Left ventricle myocardium superior (tissue), 1 donor: ENCODE measurements at regions of chr9 and their contacts with region 1.

Region 1: DNA sequence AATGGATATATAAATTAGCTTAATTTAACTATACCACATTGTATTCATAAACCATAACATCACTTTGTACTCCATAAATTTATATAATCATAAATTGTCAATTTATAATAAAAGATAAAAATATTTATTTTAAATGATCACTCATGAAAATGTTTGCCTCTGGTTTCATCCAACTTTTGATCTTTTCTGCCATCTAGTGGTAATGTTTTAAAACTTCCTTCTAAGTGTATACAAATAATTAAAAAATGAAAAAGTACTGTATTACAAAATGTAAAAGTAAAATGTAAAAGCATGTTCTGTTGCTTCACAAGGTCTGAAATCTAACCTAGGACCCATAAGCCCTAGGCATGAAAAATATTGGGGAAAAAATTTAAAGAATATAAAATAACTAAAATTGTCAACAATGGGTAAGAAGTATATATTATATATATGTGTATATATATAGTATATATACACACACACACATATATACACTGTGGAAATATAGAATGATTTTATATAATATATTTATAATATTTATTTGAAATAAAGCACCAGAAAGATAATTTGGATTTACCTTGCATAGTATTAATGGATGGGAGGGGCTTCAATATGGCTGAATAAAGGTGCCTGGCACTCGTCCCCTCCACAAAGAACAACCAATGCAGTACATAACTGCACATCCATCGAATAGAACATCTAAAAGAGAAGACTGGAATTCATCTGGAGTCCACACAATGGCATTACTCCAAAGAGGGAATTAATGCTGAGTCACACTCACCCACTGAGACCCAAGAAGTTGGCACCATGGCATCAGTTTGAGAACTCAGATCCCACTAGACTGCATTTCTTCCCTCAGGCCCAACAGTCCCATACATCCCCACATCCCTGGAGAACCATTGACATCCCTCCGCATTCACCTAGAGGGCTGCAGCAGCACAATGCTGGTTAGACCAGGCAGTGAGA is 32.5 kb downstream of the ANXA1 start:
- DNase-seq: no peak
- ATAC-seq: no peak

Region 2: GRCh38 chr9:72687331-72687730 is 496.9 kb before region 1 on chr9:
- intact Hi-C with region 1: no loop called
- DNase-seq: no peak
- ATAC-seq: no peak

Region 3: DNA sequence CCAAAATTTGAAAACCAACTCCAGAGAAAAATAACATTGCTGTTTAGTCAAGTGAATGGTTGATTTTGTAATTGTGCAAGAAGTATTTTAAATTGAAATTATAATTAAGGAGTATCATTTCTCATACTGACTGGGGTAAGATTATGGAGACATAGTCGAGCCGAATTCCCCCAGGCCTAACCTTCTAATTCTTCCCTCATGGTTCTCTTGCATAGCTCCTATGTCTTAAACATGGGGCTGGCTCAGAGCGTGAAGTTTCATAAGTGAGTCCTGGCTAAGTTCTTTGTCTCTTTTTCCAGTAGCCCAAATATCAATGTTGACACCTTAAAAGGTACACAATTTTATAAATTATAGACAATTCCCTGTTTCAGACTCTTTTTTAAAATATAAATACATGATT is 79.3 kb before region 1 on chr9:
- intact Hi-C with region 1: loop called (anchors 5 kb)
- DNase-seq: no peak
- ATAC-seq: no peak